ENCODE measurements at regions of chr15 and their contacts with region 1.

Region 1: GRCh38 chr15:38252481-38253412 is at the start of gene SPRED1:
- DNase-seq: peak; percentile 63
- H3K4me3 Mint-ChIP-seq: peak within 1 kb of the TSS; percentile 87
- H3K27ac Mint-ChIP-seq: peak within 1 kb of the TSS; percentile 18
- H3K4me1 Mint-ChIP-seq: peaks cover 20% of the 10 kb centered on the region
- H3K27me3 Mint-ChIP-seq: peaks cover 63% of the 10 kb centered on the region
- total RNA-seq, gene SPRED1: 0.44 and 0.71 TPM in 2 replicates

Region 2: DNA sequence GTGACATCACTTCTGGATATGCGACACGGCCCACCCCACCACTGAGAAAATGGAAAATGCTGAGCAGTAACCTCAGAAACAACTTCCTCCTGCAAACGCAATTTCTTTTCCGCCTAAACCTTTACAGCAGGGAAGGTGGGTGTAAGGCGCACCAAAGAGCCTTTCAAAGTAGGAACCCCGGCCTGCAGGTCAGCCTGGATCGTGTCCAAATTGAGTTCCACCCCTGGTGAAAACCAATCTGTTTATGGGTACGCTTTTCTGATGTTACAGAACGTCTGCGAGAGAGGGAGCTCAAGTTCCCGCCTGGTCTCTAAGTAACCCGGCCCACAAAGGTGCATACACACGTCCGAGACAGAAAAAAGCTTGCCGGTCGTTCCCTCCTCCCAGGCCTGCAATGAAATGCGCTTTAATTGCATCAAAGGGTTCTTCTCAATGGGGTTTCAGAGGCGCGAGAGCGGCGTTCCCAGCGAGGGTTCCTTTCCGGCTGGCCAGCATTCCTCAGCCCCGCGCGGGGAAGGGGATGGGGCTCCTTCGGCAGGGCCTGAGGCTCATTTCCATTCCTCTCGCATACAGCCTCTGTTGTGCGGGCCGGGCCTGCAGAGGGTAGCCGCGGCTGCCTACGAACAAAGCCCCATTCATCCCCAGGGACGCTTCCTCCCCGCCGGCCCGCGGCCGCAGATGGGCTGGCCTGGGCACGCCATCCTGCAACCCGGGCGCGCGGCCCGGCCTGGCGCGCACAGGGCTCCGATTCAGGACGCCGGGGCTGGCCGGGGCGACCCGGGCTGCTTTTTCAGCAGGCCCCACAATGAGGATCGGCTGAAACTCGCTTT is 180.2 kb before region 1 on chr15:
- intact Hi-C with region 1: loop called (anchors 10 kb)
- DNase-seq: peak; percentile 72
- H3K4me3 Mint-ChIP-seq: peak overlapping the region; percentile 63
- H3K27ac Mint-ChIP-seq: no peak overlapping the region
- H3K4me1 Mint-ChIP-seq: peaks cover 22% of the 10 kb centered on the region
- H3K27me3 Mint-ChIP-seq: peaks cover 75% of the 10 kb centered on the region